ENCODE measurements at regions of chr14 and their contacts with region 1.

Region 1: GRCh38 chr14:69138189-69138535 is 14.8 kb downstream of the DCAF5 start:
- DNase-seq: no peak
- ATAC-seq: peak in 7 of 8 donors; percentile 35 to 84 (median 63)
- H3K4me3 ChIP-seq: no peak overlapping the region
- H3K27ac ChIP-seq: peak overlapping the region in 7 of 10 donors; percentile 2 to 70 (median 24)
- H3K4me1 ChIP-seq: peaks cover 3 to 63% (median 43%) of the 10 kb centered on the region in 9 donors
- H3K27me3 ChIP-seq: no peaks in the 10 kb centered on the region
- CTCF ChIP-seq: no peak

Region 2: DNA sequence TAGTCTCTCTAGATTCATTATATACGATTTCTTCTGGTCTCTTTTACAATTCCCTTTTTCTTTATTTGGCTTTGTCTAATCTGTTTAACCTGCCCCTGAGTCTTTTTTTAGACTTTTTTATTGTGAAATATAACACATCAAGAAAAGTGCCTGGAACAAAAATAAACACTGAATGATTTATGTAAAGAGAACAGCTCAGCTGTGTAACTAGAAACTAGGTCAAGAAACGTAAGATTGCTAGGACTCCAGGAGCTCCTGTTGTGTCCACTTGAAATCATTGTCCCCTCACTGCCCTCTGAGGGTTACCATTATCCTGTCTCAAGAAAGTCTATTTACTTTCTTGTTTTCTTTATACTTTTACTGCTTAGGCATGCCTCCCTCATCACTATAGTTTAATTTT is 76.2 kb after region 1 on chr14:
- intact Hi-C with region 1: loop called in 1 of 10 experiments (anchors 5 kb)
- DNase-seq: no peak
- ATAC-seq: no peak
- H3K4me3 ChIP-seq: no peak overlapping the region
- H3K27ac ChIP-seq: no peak overlapping the region
- H3K4me1 ChIP-seq: no peaks in the 10 kb centered on the region
- H3K27me3 ChIP-seq: no peaks in the 10 kb centered on the region
- CTCF ChIP-seq: no peak

Measured in heart right ventricle (tissue), 16 donors.